Colonic mucosa (tissue), 4 donors: ENCODE measurements at regions of chr7 and their contacts with region 1.

Region 1: GRCh38 chr7:142094861-142095260 is 16.7 kb upstream of the MGAM2 start:
- DNase-seq: no peak
- H3K4me3 ChIP-seq: no peak overlapping the region
- H3K27ac ChIP-seq: no peak overlapping the region
- H3K4me1 ChIP-seq: no peaks in the 10 kb centered on the region
- H3K27me3 ChIP-seq: no peaks in the 10 kb centered on the region
- CTCF ChIP-seq: no peak

Region 2: GRCh38 chr7:142012825-142013511 is 81.9 kb before region 1 on chr7:
- intact Hi-C with region 1: no loop called
- DNase-seq: no peak
- H3K4me3 ChIP-seq: no peak overlapping the region
- H3K27ac ChIP-seq: no peak overlapping the region
- H3K4me1 ChIP-seq: peaks cover 7% of the 10 kb centered on the region
- H3K27me3 ChIP-seq: no peaks in the 10 kb centered on the region
- CTCF ChIP-seq: no peak

Region 3: GRCh38 chr7:142024547-142024946 is 70.3 kb before region 1 on chr7:
- intact Hi-C with region 1: no loop called
- DNase-seq: no peak
- H3K4me3 ChIP-seq: no peak overlapping the region
- H3K27ac ChIP-seq: no peak overlapping the region
- H3K4me1 ChIP-seq: no peaks in the 10 kb centered on the region
- H3K27me3 ChIP-seq: no peaks in the 10 kb centered on the region
- CTCF ChIP-seq: no peak

Region 4: GRCh38 chr7:142063551-142064442 is 31.1 kb before region 1 on chr7:
- intact Hi-C with region 1: loop called (anchors 2 kb)
- DNase-seq: no peak
- H3K4me3 ChIP-seq: no peak overlapping the region
- H3K27ac ChIP-seq: no peak overlapping the region
- H3K4me1 ChIP-seq: no peaks in the 10 kb centered on the region
- H3K27me3 ChIP-seq: no peaks in the 10 kb centered on the region
- CTCF ChIP-seq: no peak

Region 5: GRCh38 chr7:142231716-142232115 is 136.9 kb after region 1 on chr7:
- intact Hi-C with region 1: no loop called
- DNase-seq: no peak
- H3K4me3 ChIP-seq: no peak overlapping the region
- H3K27ac ChIP-seq: no peak overlapping the region
- H3K4me1 ChIP-seq: no peaks in the 10 kb centered on the region
- H3K27me3 ChIP-seq: no peaks in the 10 kb centered on the region
- CTCF ChIP-seq: no peak